IMR-90 (cell line): ENCODE measurements at regions of chr1 and their contacts with region 1.

Region 1: DNA sequence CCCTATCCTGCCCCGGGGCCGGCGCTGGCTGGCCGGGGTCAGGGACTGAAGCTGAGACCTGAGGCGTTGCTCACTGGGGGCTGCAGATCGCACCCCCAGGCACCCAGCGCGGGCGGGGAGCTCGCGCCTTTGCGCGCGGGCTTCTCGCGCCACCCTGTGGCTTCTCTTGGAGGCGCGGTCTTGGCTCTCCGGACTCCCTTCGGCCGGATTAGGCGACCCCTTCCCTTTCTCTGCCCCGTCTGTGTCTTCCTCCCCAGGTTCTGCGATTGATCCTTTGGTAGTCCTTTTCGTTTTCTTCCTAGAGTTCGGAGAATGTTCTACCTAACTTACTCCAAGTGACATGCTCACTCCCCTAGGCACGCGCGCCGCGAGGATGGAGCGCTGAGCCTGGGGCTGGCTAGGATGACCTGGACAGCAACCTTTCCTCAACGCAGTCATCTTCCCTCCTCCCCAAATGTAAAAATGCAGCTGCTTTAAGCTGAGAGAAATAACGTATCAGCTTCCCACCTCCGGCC is 495 bp upstream of the NTRK1 start:
- DNase-seq: peak; percentile 21
- ATAC-seq: peak; percentile 86
- H3K4me3 ChIP-seq: peak overlapping the region; percentile 13; the same call in 1 of the 2 replicates
- H3K27ac ChIP-seq: no peak overlapping the region
- H3K4me1 ChIP-seq: peaks cover 4% of the 10 kb centered on the region; the same call in 1 of the 2 replicates
- H3K27me3 ChIP-seq: peaks cover 88% of the 10 kb centered on the region
- CTCF ChIP-seq: peak; percentile 67
- POLR2A ChIP-seq: no peak
- RAD21 ChIP-seq: peak; percentile 80

Region 2: DNA sequence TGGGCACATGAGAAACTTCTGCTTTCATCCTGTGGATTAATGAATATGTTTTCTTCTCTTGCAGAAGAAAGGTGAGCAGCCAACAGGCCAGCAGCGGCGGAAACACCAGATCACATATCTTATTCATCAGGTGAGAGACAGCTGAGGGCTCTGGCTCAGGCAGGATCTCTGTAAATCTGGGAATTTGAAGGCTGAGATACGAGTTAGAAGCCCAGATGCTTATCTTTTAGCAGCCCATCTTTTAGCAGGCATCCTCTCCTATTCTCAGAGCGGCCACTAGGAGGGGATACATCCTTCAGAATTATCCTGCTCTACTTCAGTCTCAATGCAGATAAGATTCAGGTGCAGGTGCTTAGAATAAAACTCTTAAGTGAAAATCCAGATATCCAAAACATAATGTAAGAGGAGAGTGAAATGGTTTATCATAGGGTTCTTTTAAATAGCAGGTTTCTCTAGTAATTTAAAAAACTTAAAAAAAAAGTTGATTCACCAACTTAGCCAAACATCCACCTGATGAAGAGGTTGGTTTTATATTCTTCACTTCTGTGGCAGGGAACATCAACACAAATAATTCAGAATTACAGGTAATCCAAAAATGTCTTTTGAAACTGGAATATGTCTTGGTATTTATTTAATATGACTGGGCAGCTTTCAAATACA is 62.8 kb before region 1 on chr1:
- CTCF ChIA-PET with region 1: interaction called, 6 read pairs
- POLR2A ChIA-PET with region 1: no interaction called
- dilution Hi-C with region 1: no loop called
- in situ Hi-C with region 1: no loop called
- intact Hi-C with region 1: loop called (anchors 1 kb)
- DNase-seq: peak; percentile 64
- ATAC-seq: peak; percentile 69
- H3K4me3 ChIP-seq: no peak overlapping the region
- H3K27ac ChIP-seq: no peak overlapping the region
- H3K4me1 ChIP-seq: peaks cover 9% of the 10 kb centered on the region
- H3K27me3 ChIP-seq: no peaks in the 10 kb centered on the region
- CTCF ChIP-seq: peak; percentile 82
- POLR2A ChIP-seq: no peak
- RAD21 ChIP-seq: peak; percentile 80

Region 3: DNA sequence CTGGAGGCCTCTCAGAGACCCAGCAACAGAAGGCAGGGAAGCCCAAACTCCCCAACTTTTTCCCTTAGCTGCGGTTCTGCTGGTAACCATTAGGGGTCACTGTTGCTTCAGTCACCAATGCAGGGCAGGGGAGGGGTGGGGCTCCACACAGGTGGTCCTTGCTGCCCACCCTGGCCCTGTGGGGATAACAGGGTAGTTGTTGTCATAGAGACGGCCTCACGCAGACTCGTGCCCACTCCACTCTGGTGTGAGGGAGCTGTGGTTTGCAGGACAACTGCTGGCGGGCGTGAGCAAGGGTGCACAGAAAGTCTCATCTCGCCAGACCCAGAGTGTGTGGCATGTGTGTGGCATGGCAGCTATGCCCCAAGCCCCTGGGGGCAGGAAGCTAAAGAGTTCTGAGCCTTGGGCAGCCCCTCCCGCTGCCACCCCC is 21.2 kb before region 1 on chr1:
- CTCF ChIA-PET with region 1: interaction called, 26 read pairs
- POLR2A ChIA-PET with region 1: no interaction called
- dilution Hi-C with region 1: no loop called
- in situ Hi-C with region 1: no loop called
- intact Hi-C with region 1: no loop called
- DNase-seq: no peak
- ATAC-seq: peak; percentile 87
- H3K4me3 ChIP-seq: no peak overlapping the region
- H3K27ac ChIP-seq: no peak overlapping the region
- H3K4me1 ChIP-seq: no peaks in the 10 kb centered on the region
- H3K27me3 ChIP-seq: peaks cover 82% of the 10 kb centered on the region
- CTCF ChIP-seq: peak; percentile 75
- POLR2A ChIP-seq: no peak
- RAD21 ChIP-seq: peak; percentile 73

Region 4: DNA sequence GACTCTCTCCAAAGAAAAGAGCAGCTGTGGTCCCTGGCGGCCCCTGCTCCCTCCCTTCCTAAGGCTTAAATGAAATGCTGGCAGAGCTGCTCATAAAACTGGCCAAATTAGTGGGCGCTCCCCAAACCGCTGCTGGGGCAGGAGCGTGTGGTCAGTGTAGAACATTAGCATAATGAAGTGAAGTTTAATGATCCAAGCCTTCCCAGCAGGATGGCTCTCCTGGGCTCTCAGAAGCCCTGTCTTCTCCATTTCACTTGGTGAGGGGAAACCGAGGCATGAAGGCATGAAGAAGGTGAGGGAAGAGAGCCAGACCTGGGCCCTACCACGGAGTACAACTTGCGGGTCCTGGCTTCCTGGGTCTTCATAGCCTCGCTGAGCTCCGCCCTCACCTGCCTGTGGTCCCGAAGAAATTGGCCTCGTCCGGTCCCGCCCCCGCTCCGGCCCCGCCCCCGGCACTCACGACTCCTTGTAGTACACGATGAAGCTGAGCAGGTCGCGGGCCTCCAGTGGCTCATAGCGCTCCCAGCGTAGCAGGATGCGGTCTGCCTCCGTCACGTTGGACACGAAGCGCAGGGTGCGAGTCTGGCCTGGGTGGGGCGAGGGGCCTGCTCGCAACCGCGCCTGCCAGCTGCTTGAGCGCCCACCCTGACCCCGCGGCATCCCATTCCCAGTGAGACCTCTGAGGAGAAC is 11.6 kb before region 1 on chr1:
- CTCF ChIA-PET with region 1: interaction called, 11 read pairs
- POLR2A ChIA-PET with region 1: no interaction called
- dilution Hi-C with region 1: no loop called
- in situ Hi-C with region 1: no loop called
- intact Hi-C with region 1: no loop called
- DNase-seq: no peak
- ATAC-seq: no peak
- H3K4me3 ChIP-seq: no peak overlapping the region
- H3K27ac ChIP-seq: no peak overlapping the region
- H3K4me1 ChIP-seq: peaks cover 3% of the 10 kb centered on the region; the same call in 1 of the 2 replicates
- H3K27me3 ChIP-seq: peaks cover 87% of the 10 kb centered on the region
- CTCF ChIP-seq: no peak
- POLR2A ChIP-seq: no peak
- RAD21 ChIP-seq: no peak

Region 5: GRCh38 chr1:156879876-156880275 is 19.7 kb after region 1 on chr1:
- CTCF ChIA-PET with region 1: interaction called, 5 read pairs
- POLR2A ChIA-PET with region 1: interaction called, 11 read pairs
- dilution Hi-C with region 1: no loop called
- in situ Hi-C with region 1: no loop called
- intact Hi-C with region 1: no loop called
- DNase-seq: no peak
- ATAC-seq: no peak
- H3K4me3 ChIP-seq: no peak overlapping the region
- H3K27ac ChIP-seq: no peak overlapping the region
- H3K4me1 ChIP-seq: no peaks in the 10 kb centered on the region
- H3K27me3 ChIP-seq: peaks cover 92% of the 10 kb centered on the region
- CTCF ChIP-seq: no peak
- POLR2A ChIP-seq: no peak
- RAD21 ChIP-seq: no peak